Activated naive CD4-positive, alpha-beta T cell treated with anti-CD3 and anti-CD28 coated beads for 36 hours (primary cell): ENCODE measurements at regions of chr12 and their contacts with region 1.

Region 1: DNA sequence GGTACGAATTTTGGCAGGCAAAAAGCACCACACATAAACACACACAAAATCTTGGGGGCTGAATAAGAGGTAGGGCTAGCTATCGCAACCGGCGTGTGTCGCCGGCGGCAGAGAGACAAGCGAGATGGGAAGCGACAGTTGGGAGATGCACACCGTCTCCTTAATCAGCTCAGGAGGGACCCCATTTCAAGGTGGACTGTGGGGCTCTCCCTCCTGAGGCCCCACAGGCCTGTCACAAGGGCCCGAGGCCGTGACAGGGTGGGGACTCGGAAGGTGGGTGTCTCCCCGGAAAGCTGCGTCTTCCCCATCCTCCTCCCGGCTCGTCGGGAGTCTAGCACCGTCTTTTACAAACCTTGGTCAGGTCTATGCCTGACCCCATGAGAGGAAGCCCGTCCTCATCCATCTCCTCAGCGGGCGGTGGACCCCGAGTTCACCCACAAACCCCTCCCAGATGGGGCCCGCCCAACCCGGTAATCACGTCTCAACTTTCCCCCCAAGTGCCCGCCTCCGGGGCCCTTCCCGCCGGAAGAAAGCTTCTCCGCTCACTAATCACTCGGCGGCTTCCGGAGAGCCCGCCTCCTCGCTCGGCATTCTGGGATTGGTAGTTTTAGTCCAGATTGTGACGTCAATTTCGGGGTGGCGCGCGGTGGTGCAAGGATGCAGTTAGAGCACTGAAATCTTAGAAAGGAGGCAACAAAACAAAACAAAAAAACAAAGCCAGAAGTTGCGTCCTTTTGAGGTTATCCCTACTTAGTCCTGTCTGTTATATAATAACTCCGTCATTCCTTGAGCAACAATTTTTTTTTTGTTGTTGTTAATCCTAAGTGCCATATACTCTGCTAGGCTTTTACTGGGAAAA is at the start of gene WASHC3:
- DNase-seq: peak; percentile 98
- H3K4me3 Mint-ChIP-seq: peak within 1 kb of the TSS; percentile 96
- H3K27ac Mint-ChIP-seq: peak within 1 kb of the TSS; percentile 98
- H3K4me1 Mint-ChIP-seq: peaks cover 29% of the 10 kb centered on the region
- H3K27me3 Mint-ChIP-seq: no peaks in the 10 kb centered on the region
- total RNA-seq, gene WASHC3: 22.1 to 25.6 TPM

Region 2: DNA sequence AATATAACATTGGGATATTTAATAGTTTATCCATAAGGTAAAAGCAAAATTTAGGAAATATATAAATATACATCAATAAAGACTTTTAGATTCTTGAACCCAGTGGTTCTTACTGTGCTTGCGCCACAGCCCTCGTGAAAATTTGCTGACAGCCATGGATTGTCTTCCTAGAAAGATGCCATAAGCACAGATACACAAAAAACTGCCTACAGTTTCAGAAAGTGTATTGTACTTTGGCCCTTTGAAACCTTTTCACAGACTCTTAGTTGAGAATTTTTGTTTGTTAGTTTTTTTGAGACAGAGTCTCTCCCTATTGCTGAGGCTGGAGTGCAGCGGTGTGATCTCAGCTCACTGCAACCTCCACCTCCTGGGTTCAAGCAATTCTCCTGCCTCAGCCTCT is 1823.0 kb before region 1 on chr12:
- CTCF ChIA-PET with region 1: no interaction called
- intact Hi-C with region 1: no loop called
- DNase-seq: no peak
- H3K4me3 Mint-ChIP-seq: no peak overlapping the region
- H3K27ac Mint-ChIP-seq: no peak overlapping the region
- H3K4me1 Mint-ChIP-seq: no peaks in the 10 kb centered on the region
- H3K27me3 Mint-ChIP-seq: no peaks in the 10 kb centered on the region

Region 3: GRCh38 chr12:100266835-100267618 is 1794.8 kb before region 1 on chr12 and contains the starts of genes DEPDC4 and SCYL2:
- CTCF ChIA-PET with region 1: no interaction called
- intact Hi-C with region 1: loop called (anchors 1 kb)
- DNase-seq: peak; percentile 95
- H3K4me3 Mint-ChIP-seq: peak within 1 kb of the TSS; percentile 96
- H3K27ac Mint-ChIP-seq: peak within 1 kb of the TSS; percentile 97
- H3K4me1 Mint-ChIP-seq: peaks cover 28% of the 10 kb centered on the region
- H3K27me3 Mint-ChIP-seq: no peaks in the 10 kb centered on the region
- total RNA-seq, gene DEPDC4: 3.4 to 3.6 TPM
- total RNA-seq, gene SCYL2: 19.4 to 20.7 TPM

Region 4: GRCh38 chr12:101407436-101408345 is 654.1 kb before region 1 on chr12 and contains the start of gene ARL1:
- CTCF ChIA-PET with region 1: no interaction called
- intact Hi-C with region 1: loop called (anchors 5 kb)
- DNase-seq: peak; percentile 84
- H3K4me3 Mint-ChIP-seq: peak within 1 kb of the TSS; percentile 93
- H3K27ac Mint-ChIP-seq: peak within 1 kb of the TSS; percentile 90
- H3K4me1 Mint-ChIP-seq: peaks cover 19% of the 10 kb centered on the region
- H3K27me3 Mint-ChIP-seq: peaks cover 6% of the 10 kb centered on the region
- total RNA-seq, gene ARL1: 44.1 to 48.4 TPM

Region 5: DNA sequence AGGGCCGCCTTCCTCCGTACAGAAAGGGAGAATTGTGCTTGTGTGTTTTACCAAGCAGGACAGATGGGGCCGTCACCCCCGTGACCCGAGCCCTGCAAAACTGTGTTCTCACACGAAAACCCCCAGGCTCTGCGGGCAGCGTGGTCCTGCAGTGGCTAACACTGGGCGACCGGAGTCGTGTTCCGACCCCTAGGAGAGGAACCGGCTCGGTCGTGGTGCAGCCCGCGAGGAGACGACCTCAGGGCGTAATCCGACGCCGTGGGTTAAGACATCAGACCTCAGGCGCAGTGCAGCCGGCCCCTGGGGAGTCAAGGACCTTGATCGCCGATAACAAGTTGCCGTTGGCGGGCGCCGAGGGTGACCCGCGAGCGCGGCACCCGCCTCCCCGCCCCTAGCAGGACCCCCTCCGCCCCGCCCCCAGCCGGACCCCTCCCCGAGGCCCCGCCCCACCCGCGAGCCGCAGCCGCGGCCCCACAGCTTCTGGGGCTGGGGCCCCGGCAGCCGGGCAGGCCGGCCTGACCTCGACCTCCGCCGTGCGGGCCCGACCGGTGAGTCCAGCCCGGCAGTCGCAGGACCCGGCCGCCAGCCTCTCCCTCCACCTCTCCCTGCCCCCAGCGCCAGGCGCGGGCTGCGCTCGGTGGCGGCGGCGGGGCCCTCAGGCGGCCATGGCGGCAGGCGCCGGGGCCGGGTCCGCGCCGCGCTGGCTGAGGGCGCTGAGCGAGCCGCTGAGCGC is 364.4 kb before region 1 on chr12 and contains the start of gene CHPT1:
- CTCF ChIA-PET with region 1: no interaction called
- intact Hi-C with region 1: loop called (anchors 5 kb)
- DNase-seq: peak; percentile 57
- H3K4me3 Mint-ChIP-seq: peak within 1 kb of the TSS; percentile 87
- H3K27ac Mint-ChIP-seq: peak within 1 kb of the TSS; percentile 80
- H3K4me1 Mint-ChIP-seq: peaks cover 45% of the 10 kb centered on the region
- H3K27me3 Mint-ChIP-seq: no peaks in the 10 kb centered on the region
- total RNA-seq, gene CHPT1: 17.1 to 20.0 TPM

Region 6: GRCh38 chr12:101859664-101860607 is 201.9 kb before region 1 on chr12:
- CTCF ChIA-PET with region 1: no interaction called
- intact Hi-C with region 1: loop called (anchors 5 kb)
- DNase-seq: no peak
- H3K4me3 Mint-ChIP-seq: no peak overlapping the region
- H3K27ac Mint-ChIP-seq: peak overlapping the region; percentile 54
- H3K4me1 Mint-ChIP-seq: peaks cover 24% of the 10 kb centered on the region
- H3K27me3 Mint-ChIP-seq: peaks cover 2% of the 10 kb centered on the region

Region 7: DNA sequence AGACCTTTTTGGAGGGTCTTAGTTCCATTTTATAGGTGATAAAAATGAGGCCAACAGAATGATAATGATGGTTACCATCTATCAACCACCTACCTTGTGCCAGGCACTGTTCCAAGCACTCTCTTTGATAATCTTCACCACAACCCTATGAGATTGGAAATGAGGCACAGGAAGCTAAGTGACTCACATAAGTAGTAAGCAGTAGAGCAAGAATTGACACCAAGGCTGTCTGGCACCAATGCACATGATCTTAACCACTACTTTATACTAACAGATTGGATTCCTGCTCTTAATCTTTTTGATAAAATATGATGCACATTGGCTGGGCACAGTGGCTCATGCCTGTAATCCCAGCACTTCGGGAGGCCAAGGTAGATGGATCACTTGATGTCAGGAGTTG is 93.0 kb before region 1 on chr12:
- CTCF ChIA-PET with region 1: no interaction called
- intact Hi-C with region 1: loop called (anchors 1 kb)
- DNase-seq: peak; percentile 32
- H3K4me3 Mint-ChIP-seq: no peak overlapping the region
- H3K27ac Mint-ChIP-seq: no peak overlapping the region
- H3K4me1 Mint-ChIP-seq: peaks cover 16% of the 10 kb centered on the region
- H3K27me3 Mint-ChIP-seq: no peaks in the 10 kb centered on the region

Region 8: GRCh38 chr12:102080842-102081241 is 19.1 kb after region 1 on chr12:
- CTCF ChIA-PET with region 1: no interaction called
- intact Hi-C with region 1: no loop called
- DNase-seq: no peak
- H3K4me3 Mint-ChIP-seq: no peak overlapping the region
- H3K27ac Mint-ChIP-seq: no peak overlapping the region
- H3K4me1 Mint-ChIP-seq: no peaks in the 10 kb centered on the region
- H3K27me3 Mint-ChIP-seq: no peaks in the 10 kb centered on the region

Region 9: DNA sequence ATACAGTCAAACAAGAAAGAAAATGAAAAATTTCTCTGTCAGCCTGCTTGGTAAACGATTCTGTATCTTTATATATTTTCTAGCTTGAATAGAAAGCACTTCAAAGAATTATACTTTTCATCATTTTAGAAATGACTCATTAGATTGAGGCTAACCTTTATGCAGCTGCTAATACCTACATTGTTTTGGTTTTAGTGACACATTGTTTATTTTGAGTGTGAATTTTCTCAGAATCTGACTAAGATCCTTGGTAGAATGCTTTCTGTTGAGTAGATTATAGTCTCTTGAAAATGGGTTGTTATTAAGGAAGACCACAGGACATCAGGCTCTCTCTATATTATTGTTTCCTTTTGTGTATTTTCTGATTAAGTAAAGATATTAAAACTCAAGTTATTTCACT is 136.0 kb after region 1 on chr12 and contains the start of gene PMCH:
- CTCF ChIA-PET with region 1: no interaction called
- intact Hi-C with region 1: loop called (anchors 1 kb)
- DNase-seq: no peak
- H3K4me3 Mint-ChIP-seq: no peak within 1 kb of the TSS
- H3K27ac Mint-ChIP-seq: no peak within 1 kb of the TSS
- H3K4me1 Mint-ChIP-seq: peaks cover 8% of the 10 kb centered on the region
- H3K27me3 Mint-ChIP-seq: no peaks in the 10 kb centered on the region
- total RNA-seq, gene PMCH: not detected

Region 10: GRCh38 chr12:102376181-102376747 is 314.5 kb after region 1 on chr12:
- CTCF ChIA-PET with region 1: no interaction called
- intact Hi-C with region 1: no loop called
- DNase-seq: no peak
- H3K4me3 Mint-ChIP-seq: no peak overlapping the region
- H3K27ac Mint-ChIP-seq: no peak overlapping the region
- H3K4me1 Mint-ChIP-seq: peaks cover 4% of the 10 kb centered on the region
- H3K27me3 Mint-ChIP-seq: no peaks in the 10 kb centered on the region